Uterus (tissue), 4 donors: ENCODE measurements at regions of chr16 and their contacts with region 1.

Region 1: GRCh38 chr16:77971306-77972271 is 50.8 kb upstream of the CLEC3A start:
- DNase-seq: peak; percentile 57 to 66
- H3K4me3 ChIP-seq: no peak overlapping the region
- H3K27ac ChIP-seq: no peak overlapping the region
- H3K4me1 ChIP-seq: no peaks in the 10 kb centered on the region
- H3K27me3 ChIP-seq: no peaks in the 10 kb centered on the region
- CTCF ChIP-seq: peak; percentile 59 to 86 (median 74)
- POLR2A ChIP-seq: no peak

Region 2: GRCh38 chr16:77657016-77657415 is 314.6 kb before region 1 on chr16:
- intact Hi-C with region 1: no loop called
- DNase-seq: no peak
- H3K4me3 ChIP-seq: no peak overlapping the region
- H3K27ac ChIP-seq: no peak overlapping the region
- H3K4me1 ChIP-seq: no peaks in the 10 kb centered on the region
- H3K27me3 ChIP-seq: no peaks in the 10 kb centered on the region
- CTCF ChIP-seq: no peak
- POLR2A ChIP-seq: no peak

Region 3: DNA sequence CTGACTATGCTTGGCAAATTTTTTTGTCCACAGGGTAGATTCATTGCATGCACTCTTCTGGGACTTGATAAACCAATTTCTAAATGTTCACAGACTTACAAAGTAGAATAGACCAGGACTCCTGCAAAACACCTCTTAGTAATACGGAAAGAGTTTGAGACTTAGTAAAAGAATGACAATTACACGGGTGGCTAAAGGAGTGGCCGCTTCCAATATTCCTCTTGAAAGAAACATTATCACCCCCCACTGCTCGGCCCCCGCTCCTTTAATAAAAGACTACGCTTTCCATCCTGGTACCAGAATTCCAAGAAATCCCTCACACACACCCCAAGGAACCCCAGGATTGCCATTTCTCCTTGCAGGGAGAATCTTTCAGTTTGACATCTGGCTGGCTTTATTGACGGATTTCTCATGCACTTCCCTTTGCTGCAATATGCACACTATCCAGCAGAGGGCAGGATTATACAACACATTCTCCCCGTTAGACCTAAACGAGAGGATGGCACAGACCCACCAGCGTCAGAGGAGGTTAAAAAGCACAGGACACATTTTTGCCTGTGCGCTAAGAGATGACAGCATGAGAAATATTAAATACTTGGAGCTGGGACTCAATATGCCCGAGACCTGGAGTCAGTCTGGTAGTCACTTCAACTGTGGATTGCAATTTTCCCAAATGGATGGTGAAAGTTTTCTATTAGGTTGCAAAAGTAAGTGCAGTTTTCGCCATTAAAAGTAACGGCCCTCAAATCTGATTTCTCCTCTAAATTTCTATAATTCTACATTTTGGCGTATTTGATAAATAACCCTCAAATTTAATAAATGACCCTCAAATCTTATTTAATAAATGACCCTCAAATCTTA is 295.9 kb before region 1 on chr16:
- intact Hi-C with region 1: loop called (anchors 5 kb)
- DNase-seq: peak; percentile 51 to 67
- H3K4me3 ChIP-seq: no peak overlapping the region
- H3K27ac ChIP-seq: no peak overlapping the region
- H3K4me1 ChIP-seq: no peaks in the 10 kb centered on the region
- H3K27me3 ChIP-seq: no peaks in the 10 kb centered on the region
- CTCF ChIP-seq: peak; percentile 86 to 91 (median 90)
- POLR2A ChIP-seq: no peak

Region 4: DNA sequence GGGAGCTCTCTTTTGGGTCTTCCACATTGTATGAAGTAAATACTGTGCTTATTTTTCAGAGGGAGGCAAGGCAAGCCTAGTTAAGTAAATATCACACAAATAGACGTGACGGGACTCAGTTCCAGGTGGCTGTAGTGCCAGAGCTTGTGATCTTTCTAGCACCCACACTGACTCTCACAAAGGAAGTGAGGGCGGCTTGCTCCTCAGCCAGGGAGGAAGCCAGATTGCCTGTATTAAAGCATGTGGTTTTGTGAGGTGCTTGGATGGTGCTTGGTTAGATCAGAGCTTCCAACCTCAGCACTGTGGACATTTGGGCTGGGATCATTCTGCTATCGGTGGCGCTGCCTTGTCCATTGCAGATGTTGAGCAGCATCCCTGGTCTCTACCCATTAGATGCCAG is 103.1 kb before region 1 on chr16:
- intact Hi-C with region 1: no loop called
- DNase-seq: no peak
- H3K4me3 ChIP-seq: no peak overlapping the region
- H3K27ac ChIP-seq: no peak overlapping the region
- H3K4me1 ChIP-seq: no peaks in the 10 kb centered on the region
- H3K27me3 ChIP-seq: no peaks in the 10 kb centered on the region
- CTCF ChIP-seq: no peak
- POLR2A ChIP-seq: no peak